Common myeloid progenitor, CD34-positive (primary cell): ENCODE measurements at regions of chr12 and their contacts with region 1.

Region 1: DNA sequence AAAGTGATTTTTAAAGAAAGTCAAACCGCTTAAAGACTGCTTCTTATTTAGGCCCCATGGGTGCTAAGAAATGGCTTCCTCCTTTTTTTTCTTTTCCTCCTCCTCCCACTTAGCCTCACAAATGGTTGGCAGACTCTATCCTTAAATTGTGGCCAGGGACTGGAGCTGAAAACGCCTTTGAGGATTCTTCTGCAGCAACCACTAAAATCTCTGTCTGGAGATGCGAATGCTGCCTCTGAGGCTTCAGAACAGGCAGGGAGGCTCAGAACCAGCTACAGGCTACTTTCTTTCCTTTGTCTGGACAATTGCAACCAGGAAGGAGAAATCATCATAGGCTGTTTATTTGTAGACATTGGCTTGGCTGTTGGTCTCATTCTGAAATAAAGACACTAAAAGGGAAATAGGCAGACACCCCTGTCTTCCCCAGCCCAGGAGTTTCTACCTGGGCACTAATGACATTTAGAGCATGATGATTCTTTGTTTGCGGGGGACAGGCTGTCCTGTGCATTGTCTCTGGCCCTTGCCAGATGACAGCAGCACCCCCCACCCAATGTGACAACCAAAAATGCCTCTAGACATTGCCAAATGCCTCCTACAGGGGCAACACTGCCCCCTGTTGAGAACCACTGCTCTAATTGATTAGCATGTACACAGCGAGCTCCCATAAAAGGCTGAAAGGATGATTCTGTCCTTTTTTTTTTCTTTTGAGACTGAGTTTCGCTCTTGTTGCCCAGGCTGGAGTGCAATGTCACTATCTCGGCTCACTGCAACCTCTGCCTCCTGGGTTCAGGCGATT is 50.3 kb downstream of the MAP1LC3B2 start:
- DNase-seq: peak in 2 of 3 donors; percentile 63 to 65
- H3K4me3 ChIP-seq: no peak overlapping the region
- H3K27ac ChIP-seq: no peak overlapping the region
- H3K4me1 ChIP-seq: peaks cover 0 to 18% (median 12%) of the 10 kb centered on the region in 4 experiments
- H3K27me3 ChIP-seq: no peaks in the 10 kb centered on the region

Region 2: DNA sequence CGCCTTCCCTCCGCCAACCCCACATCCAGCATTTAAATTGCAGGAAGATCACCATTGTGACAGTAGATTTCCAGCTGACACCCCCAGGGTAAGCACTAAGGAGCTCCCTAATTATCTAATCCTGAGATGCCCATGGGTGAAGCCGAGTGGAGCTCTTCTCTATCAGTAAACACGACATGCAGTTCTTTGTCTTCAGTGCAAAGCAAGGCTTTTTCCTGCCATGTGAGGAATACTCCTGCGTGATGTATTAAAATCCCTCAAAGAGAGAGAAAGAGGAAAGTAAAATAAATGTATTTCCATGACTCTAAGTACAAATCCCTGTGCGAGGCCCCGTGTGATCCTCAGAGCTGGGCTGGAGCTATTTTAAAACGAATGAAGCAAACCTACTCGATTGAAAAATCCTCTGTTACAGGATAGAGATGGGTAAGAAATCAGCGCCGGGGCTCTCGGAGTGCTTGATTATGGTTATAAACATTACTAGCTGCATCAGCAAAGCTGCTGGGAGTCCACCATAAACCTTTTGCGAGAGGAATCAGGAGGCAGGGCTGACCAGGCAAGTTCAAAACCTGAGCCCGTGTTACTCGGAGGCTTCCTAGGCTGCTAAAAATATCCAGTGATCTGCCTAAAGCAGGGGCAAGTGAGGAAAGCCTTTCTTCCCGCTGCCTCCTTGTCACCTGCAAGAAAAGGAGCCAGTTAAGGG is 11.1 kb after region 1 on chr12:
- CTCF ChIA-PET with region 1: interaction called, 10 read pairs
- POLR2A ChIA-PET with region 1: no interaction called
- DNase-seq: no peak
- H3K4me3 ChIP-seq: no peak overlapping the region
- H3K27ac ChIP-seq: no peak overlapping the region
- H3K4me1 ChIP-seq: peaks cover 0 to 6% (median 0%) of the 10 kb centered on the region in 4 experiments
- H3K27me3 ChIP-seq: no peaks in the 10 kb centered on the region

Region 3: DNA sequence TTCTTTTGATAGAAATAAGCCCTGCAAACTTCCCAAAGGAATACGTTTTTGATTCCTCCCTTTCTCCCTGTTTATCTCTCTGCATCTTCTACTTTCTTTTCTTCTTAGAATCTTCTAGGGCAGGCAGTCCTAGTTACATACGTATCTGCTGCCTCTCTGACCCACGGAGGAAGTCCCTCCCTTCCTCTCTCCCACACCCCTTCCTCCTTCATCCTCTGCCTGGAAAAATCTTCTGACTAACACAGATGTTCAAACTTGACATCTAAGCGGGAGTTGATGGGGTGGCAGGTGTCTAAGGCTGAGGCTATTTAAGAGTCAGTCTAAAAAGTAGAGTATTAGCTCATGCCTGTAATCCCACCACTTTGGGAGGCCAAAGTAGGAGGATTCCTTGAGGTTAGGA is 38.3 kb after region 1 on chr12:
- CTCF ChIA-PET with region 1: no interaction called
- POLR2A ChIA-PET with region 1: no interaction called
- DNase-seq: no peak
- H3K4me3 ChIP-seq: no peak overlapping the region
- H3K27ac ChIP-seq: no peak overlapping the region
- H3K4me1 ChIP-seq: peaks cover 0 to 30% (median 16%) of the 10 kb centered on the region in 4 experiments
- H3K27me3 ChIP-seq: no peaks in the 10 kb centered on the region